Activated CD4-positive, alpha-beta memory T cell treated with anti-CD3 and anti-CD28 coated beads for 36 hours (primary cell): ENCODE measurements at regions of chr4 and their contacts with region 1.

Region 1: DNA sequence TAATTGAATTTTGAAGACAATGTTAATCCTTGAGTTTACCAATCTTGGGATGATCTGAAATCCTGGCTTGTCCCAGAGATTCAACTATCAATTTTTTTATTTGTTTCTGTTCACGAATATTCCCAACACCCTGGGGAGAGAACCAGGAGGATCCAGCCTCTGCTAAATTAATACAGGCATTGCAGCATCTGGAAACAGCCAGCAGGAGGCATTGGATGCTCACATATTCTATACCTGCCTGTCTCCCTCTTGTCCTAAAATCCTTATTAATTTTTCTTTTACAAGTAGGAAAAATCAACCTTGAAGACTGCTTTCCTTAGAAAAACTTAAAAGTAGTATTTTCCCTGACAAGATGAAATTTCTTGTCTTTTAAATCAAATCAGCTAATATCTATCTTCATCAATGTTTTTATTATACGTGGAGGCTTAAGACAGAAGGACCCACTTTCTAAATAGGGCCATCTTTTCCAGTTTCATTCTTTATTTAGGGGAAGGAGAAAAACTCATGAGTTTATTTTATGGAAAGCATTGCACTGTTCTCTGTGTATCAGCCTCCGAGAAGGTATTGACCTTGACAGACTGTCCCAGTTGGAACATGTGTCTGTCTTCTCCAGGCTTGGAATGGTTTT is 102.4 kb downstream of the CLNK start:
- DNase-seq: peak; percentile 15
- H3K4me3 Mint-ChIP-seq: no peak overlapping the region
- H3K27ac Mint-ChIP-seq: no peak overlapping the region
- H3K4me1 Mint-ChIP-seq: peaks cover 15% of the 10 kb centered on the region
- H3K27me3 Mint-ChIP-seq: no peaks in the 10 kb centered on the region

Region 2: DNA sequence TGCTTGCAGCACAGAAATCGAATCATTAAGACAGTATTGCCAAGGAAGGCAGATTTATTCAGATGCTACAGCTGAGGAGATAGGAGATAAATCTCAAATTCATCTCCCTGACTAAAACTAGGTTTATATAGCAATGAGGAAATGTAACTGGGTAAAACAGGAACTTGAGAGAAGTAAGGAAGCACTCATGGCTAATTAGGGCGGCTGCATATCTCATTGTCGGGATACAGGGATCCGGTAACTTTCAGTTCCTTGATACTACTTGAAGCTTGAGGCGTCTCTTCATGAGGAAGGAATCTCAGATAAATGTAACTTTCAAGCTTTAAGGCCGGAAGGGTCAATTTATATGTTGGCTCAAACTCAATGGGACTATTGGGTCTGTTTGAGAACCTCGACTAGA is 336.4 kb before region 1 on chr4:
- CTCF ChIA-PET with region 1: no interaction called
- POLR2A ChIA-PET with region 1: no interaction called
- intact Hi-C with region 1: no loop called
- DNase-seq: no peak
- H3K4me3 Mint-ChIP-seq: no peak overlapping the region
- H3K27ac Mint-ChIP-seq: no peak overlapping the region
- H3K4me1 Mint-ChIP-seq: no peaks in the 10 kb centered on the region
- H3K27me3 Mint-ChIP-seq: peaks cover 7% of the 10 kb centered on the region

Region 3: DNA sequence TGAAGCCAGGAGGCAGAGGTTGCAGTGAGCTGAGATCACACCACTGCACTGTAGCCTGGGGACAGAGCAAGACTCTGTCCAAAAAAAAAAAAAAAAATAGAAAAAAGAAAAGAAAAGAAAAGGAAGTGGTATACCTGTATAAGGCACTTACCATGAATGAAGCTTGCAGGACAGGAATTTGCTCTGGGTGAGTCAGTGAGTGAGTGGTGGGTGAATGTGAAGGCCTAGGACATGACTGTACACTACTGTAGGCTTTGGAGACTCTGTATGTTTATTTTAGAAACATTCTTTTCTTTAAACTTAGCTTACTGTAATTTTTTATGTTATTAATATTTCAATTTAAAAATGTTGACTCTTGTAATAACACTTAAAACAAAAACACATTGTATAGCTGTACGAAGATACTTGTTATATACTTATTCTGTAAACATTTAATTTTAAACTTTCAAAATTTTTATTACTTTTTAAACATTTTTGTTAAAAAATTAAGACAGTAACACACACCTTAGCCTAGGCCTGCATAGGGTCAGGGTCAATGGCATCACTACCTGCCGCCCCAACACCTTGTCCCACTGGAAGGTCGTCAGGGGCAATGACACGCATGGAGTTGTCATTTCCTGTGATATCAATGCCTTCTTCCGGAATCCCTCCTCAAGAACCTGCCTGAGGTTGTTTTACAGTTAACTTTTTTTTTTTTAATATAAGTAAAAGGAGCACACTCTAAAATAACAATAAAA is 23.7 kb after region 1 on chr4:
- CTCF ChIA-PET with region 1: no interaction called
- POLR2A ChIA-PET with region 1: no interaction called
- intact Hi-C with region 1: no loop called
- DNase-seq: no peak
- H3K4me3 Mint-ChIP-seq: no peak overlapping the region
- H3K27ac Mint-ChIP-seq: no peak overlapping the region
- H3K4me1 Mint-ChIP-seq: no peaks in the 10 kb centered on the region
- H3K27me3 Mint-ChIP-seq: no peaks in the 10 kb centered on the region

Region 4: GRCh38 chr4:11424000-11424399 is 841.8 kb after region 1 on chr4:
- CTCF ChIA-PET with region 1: no interaction called
- POLR2A ChIA-PET with region 1: no interaction called
- intact Hi-C with region 1: loop called (anchors 1 kb)
- DNase-seq: no peak
- H3K4me3 Mint-ChIP-seq: no peak overlapping the region
- H3K27ac Mint-ChIP-seq: no peak overlapping the region
- H3K4me1 Mint-ChIP-seq: peaks cover 12% of the 10 kb centered on the region
- H3K27me3 Mint-ChIP-seq: peaks cover 25% of the 10 kb centered on the region

Region 5: GRCh38 chr4:11428899-11429698 is 846.9 kb after region 1 on chr4:
- CTCF ChIA-PET with region 1: no interaction called
- POLR2A ChIA-PET with region 1: no interaction called
- intact Hi-C with region 1: loop called (anchors 1 kb)
- DNase-seq: peak; percentile 58
- H3K4me3 Mint-ChIP-seq: peak overlapping the region; percentile 54
- H3K27ac Mint-ChIP-seq: no peak overlapping the region
- H3K4me1 Mint-ChIP-seq: peaks cover 12% of the 10 kb centered on the region
- H3K27me3 Mint-ChIP-seq: peaks cover 51% of the 10 kb centered on the region

Region 6: GRCh38 chr4:11700751-11701226 is 1118.6 kb after region 1 on chr4:
- CTCF ChIA-PET with region 1: no interaction called
- POLR2A ChIA-PET with region 1: no interaction called
- intact Hi-C with region 1: loop called (anchors 10 kb)
- DNase-seq: no peak
- H3K4me3 Mint-ChIP-seq: no peak overlapping the region
- H3K27ac Mint-ChIP-seq: no peak overlapping the region
- H3K4me1 Mint-ChIP-seq: no peaks in the 10 kb centered on the region
- H3K27me3 Mint-ChIP-seq: no peaks in the 10 kb centered on the region